ENCODE measurements at regions of chr9 and their contacts with region 1.

Region 1: GRCh38 chr9:112997236-112997941 is 14.6 kb downstream of the ZNF883 start:
- DNase-seq: no peak
- H3K4me3 ChIP-seq: no peak overlapping the region
- H3K27ac ChIP-seq: no peak overlapping the region
- H3K4me1 ChIP-seq: no peaks in the 10 kb centered on the region
- H3K27me3 ChIP-seq: no peaks in the 10 kb centered on the region
- CTCF ChIP-seq: no peak
- POLR2A ChIP-seq: no peak

Region 2: DNA sequence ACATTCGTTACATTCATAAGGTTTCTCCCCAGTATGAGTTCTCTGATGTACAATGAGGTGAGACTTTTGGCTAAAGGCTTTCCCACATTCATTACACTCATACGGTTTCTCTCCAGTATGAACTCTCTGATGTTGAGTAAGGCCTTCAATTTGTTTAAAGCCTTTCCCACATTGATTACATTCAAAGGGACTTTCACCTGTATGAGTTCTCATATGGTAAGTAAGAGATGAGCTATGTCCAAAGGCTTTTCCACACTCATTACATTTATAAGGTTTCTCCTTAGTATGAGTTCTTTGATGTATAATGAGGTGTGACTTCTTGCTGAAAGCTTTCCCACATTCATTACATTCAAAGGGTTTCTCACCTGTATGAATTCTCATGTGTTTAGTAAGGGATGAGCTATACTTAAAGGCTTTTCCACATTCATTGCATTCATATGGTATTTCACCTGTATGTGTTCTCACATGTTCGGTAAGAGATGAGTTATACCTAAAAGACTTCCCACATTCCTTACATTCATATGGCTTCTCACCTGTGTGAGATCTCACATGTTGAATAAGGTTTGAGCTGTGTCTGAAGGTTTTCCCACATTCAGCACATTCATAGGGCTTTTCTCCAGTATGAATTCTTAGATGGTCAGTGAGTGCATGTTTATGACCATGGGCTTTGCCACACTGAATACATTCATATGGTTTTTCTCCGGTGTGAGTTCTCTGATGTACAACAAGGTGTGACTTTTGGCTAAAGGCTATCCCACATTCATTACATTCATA is 45.7 kb after region 1 on chr9:
- CTCF ChIA-PET with region 1: no interaction called
- POLR2A ChIA-PET with region 1: no interaction called
- dilution Hi-C with region 1: no loop called
- intact Hi-C with region 1: loop called (anchors 10 kb)
- DNase-seq: no peak
- H3K4me3 ChIP-seq: no peak overlapping the region
- H3K27ac ChIP-seq: no peak overlapping the region
- H3K4me1 ChIP-seq: no peaks in the 10 kb centered on the region
- H3K27me3 ChIP-seq: no peaks in the 10 kb centered on the region
- CTCF ChIP-seq: no peak
- POLR2A ChIP-seq: no peak

Region 3: GRCh38 chr9:113095561-113095960 is 98.2 kb after region 1 on chr9:
- CTCF ChIA-PET with region 1: no interaction called
- POLR2A ChIA-PET with region 1: no interaction called
- dilution Hi-C with region 1: no loop called
- intact Hi-C with region 1: no loop called
- DNase-seq: no peak
- H3K4me3 ChIP-seq: no peak overlapping the region
- H3K27ac ChIP-seq: no peak overlapping the region
- H3K4me1 ChIP-seq: no peaks in the 10 kb centered on the region
- H3K27me3 ChIP-seq: peaks cover 4 to 9% of the 10 kb centered on the region in 2 experiments
- CTCF ChIP-seq: no peak
- POLR2A ChIP-seq: no peak

Measured in endothelial cell of umbilical vein (primary cell).